Activated T-helper 2 cell treated with anti-CD3 and anti-CD28 coated beads, Interferon-gamma antibody, Interleukin-2, Interleukin-4, amounts not matched to agents 10 μg/mL and 5 μg/mL and 100 μg/mL, durations not matched to agents 14 hours and 24 hours and 36 hours (primary cell): ENCODE measurements at regions of chr7 and their contacts with region 1.

Region 1: GRCh38 chr7:106947244-106947728 is 82.2 kb downstream of the PIK3CG start:
- DNase-seq: no peak
- H3K4me3 Mint-ChIP-seq: no peak overlapping the region
- H3K27ac Mint-ChIP-seq: no peak overlapping the region
- H3K4me1 Mint-ChIP-seq: no peaks in the 10 kb centered on the region
- H3K27me3 Mint-ChIP-seq: peaks cover 18% of the 10 kb centered on the region

Region 2: DNA sequence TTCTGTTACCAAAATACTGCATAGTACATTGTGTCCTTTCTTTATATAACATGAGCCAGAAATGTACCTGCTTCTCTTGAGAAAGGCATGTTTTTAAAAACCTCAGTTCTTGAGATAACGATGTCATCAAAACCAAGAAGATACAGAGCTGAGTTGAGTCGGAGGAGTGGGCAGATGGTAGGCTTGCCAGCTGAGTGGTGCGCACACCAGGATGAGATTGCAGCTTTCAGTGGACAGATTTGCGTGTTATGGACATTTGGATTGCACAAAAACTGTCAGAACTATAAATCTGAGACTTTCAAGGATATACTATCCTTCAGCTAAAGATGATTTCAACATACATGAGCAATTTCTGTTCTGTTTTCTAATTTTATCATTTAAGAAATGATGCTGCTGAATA is 122.2 kb after region 1 on chr7:
- intact Hi-C with region 1: no loop called
- DNase-seq: no peak
- H3K4me3 Mint-ChIP-seq: no peak overlapping the region
- H3K27ac Mint-ChIP-seq: no peak overlapping the region
- H3K4me1 Mint-ChIP-seq: peaks cover 1% of the 10 kb centered on the region
- H3K27me3 Mint-ChIP-seq: peaks cover 32% of the 10 kb centered on the region

Region 3: DNA sequence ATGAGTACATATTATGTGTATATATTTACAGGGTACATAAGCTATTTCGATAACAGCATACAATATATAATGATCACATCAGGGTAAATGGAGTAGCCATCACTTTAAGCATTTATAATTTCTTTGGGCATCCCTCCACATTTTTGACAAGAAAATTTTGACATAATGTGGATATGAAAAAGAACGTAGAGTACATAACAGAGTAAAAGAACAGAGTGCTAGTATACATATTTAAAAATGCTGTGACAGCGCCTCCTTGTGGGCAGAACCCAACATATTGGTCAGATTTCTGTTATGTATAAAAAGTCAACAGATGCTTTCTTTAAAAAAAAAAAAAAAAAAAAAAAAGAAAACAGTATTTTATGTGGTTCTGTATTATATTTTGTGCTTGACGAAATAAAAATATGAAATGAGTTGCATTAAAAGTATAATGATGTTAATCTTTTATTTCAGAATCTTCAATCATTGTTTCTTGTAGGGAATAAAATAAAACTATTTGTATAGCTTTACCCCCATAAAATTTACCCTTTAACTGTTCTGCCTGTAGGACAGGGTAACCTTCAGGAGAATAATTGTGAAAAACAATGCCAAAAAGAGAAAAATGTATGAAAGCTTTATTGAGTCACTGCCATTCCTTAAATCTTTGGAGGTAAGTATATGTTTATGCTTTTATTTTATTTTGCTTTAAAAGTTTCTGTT is 203.2 kb after region 1 on chr7:
- intact Hi-C with region 1: loop called (anchors 1 kb)
- DNase-seq: peak; percentile 44
- H3K4me3 Mint-ChIP-seq: no peak overlapping the region
- H3K27ac Mint-ChIP-seq: no peak overlapping the region
- H3K4me1 Mint-ChIP-seq: no peaks in the 10 kb centered on the region
- H3K27me3 Mint-ChIP-seq: peaks cover 9% of the 10 kb centered on the region